GM12878 (cell line): ENCODE measurements at regions of chr5 and their contacts with region 1.

Region 1: GRCh38 chr5:151315998-151316597 is 12.5 kb upstream of the SLC36A3 start:
- DNase-seq: peak; percentile 7
- ATAC-seq: peak; percentile 95
- H3K4me3 ChIP-seq: no peak overlapping the region
- H3K27ac ChIP-seq: no peak overlapping the region
- H3K4me1 ChIP-seq: no peaks in the 10 kb centered on the region
- H3K27me3 ChIP-seq: no peaks in the 10 kb centered on the region; a peak in 1 of 4 replicates
- CTCF ChIP-seq: peak; percentile 93 to 95 (median 94); a peak in 5 of 6 replicates
- EP300 ChIP-seq: no peak
- POLR2A ChIP-seq: no peak
- RAD21 ChIP-seq: peak; percentile 86

Region 2: GRCh38 chr5:150106674-150107426 is 1209.2 kb before region 1 on chr5:
- CTCF ChIA-PET with region 1: no interaction called
- POLR2A ChIA-PET with region 1: no interaction called
- RAD21 ChIA-PET with region 1: no interaction called
- SMC1A ChIA-PET with region 1: no interaction called
- in situ Hi-C with region 1: no loop called
- intact Hi-C with region 1: no loop called
- DNase-seq: no peak
- ATAC-seq: peak; percentile 34; the same call in 2 of the 3 replicates
- H3K4me3 ChIP-seq: no peak overlapping the region
- H3K27ac ChIP-seq: no peak overlapping the region
- H3K4me1 ChIP-seq: peaks cover 14% of the 10 kb centered on the region
- H3K27me3 ChIP-seq: no peaks in the 10 kb centered on the region
- CTCF ChIP-seq: no peak
- EP300 ChIP-seq: no peak
- POLR2A ChIP-seq: no peak
- RAD21 ChIP-seq: no peak

Region 3: DNA sequence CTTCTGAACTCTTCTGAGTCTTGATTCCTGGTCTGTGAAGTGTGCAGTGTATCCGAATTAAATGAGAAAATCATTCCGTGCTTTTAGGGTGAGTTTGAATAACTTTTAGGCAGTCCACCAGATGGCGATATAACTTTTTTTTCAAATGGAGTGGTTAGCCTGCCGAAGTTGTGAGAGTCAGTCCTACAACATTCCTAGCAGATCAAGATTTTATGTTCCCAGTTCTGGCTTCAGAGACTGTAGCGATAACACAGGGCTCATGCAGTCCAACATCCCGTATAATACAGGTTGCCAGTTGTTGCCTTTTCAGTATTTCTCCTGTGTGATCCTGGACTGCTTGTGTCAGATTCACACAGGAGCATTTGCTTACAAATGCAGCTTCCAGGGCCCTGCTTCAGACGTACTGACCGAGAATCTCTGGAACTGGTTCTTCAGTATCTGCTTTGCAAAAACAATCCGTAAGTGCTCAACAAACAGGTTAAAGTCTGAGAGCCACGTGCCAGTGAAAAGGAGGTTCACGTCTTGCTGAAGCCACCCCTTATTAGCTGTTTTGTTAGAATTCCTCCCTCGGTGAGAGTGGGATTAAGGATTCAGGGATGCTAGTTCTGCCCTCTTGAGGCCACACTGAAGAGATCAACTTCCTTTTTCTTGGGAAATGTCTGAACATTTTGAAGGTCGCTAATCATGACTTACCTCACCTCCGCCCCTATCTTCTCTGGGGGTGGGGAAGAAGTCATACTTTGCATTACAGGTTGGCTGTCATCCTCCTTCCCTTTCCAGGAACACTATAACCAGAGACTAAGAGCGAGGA is 514.8 kb before region 1 on chr5:
- CTCF ChIA-PET with region 1: interaction called, 4 read pairs
- POLR2A ChIA-PET with region 1: no interaction called
- RAD21 ChIA-PET with region 1: no interaction called
- SMC1A ChIA-PET with region 1: no interaction called
- in situ Hi-C with region 1: no loop called
- intact Hi-C with region 1: loop called (anchors 10 kb)
- DNase-seq: no peak
- ATAC-seq: peak; percentile 83
- H3K4me3 ChIP-seq: no peak overlapping the region
- H3K27ac ChIP-seq: no peak overlapping the region
- H3K4me1 ChIP-seq: no peaks in the 10 kb centered on the region
- H3K27me3 ChIP-seq: no peaks in the 10 kb centered on the region
- CTCF ChIP-seq: peak; percentile 49 to 60 (median 52); a peak in 5 of 6 replicates
- EP300 ChIP-seq: no peak
- POLR2A ChIP-seq: no peak
- RAD21 ChIP-seq: peak; percentile 61

Region 4: DNA sequence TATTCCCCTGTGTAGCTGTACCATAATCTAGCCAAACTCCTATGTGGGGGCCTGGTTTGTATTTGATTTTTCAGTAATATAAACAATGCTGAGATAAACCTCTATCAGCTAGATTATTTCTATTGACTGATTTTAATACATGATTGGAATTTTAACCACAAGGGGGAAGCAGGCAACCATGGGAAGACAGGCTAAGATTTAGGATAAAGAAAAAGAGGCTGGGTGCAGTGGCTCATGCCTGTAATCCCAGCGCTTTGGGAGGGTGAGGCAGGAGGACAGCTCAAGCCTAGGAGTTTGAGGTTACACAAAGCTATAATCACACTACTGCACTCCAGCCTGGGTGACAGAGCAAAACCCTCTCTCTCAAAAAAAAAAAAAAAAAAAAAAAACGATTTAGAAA is 313.8 kb before region 1 on chr5:
- CTCF ChIA-PET with region 1: interaction called, 7 read pairs
- POLR2A ChIA-PET with region 1: no interaction called
- RAD21 ChIA-PET with region 1: no interaction called
- SMC1A ChIA-PET with region 1: no interaction called
- in situ Hi-C with region 1: no loop called
- intact Hi-C with region 1: loop called (anchors 10 kb)
- DNase-seq: no peak
- ATAC-seq: no peak
- H3K4me3 ChIP-seq: no peak overlapping the region
- H3K27ac ChIP-seq: no peak overlapping the region
- H3K4me1 ChIP-seq: no peaks in the 10 kb centered on the region
- H3K27me3 ChIP-seq: no peaks in the 10 kb centered on the region
- CTCF ChIP-seq: no peak; a peak in 1 of 6 replicates
- EP300 ChIP-seq: no peak
- POLR2A ChIP-seq: no peak
- RAD21 ChIP-seq: peak; percentile 42

Region 5: GRCh38 chr5:151283816-151284205 is 32.3 kb before region 1 on chr5:
- CTCF ChIA-PET with region 1: interaction called, 10 read pairs
- POLR2A ChIA-PET with region 1: no interaction called
- RAD21 ChIA-PET with region 1: interaction called, 4 read pairs
- SMC1A ChIA-PET with region 1: interaction called, 3 read pairs
- in situ Hi-C with region 1: no loop called
- intact Hi-C with region 1: no loop called
- DNase-seq: no peak
- ATAC-seq: no peak; the same call in 2 of the 3 replicates
- H3K4me3 ChIP-seq: no peak overlapping the region
- H3K27ac ChIP-seq: no peak overlapping the region
- H3K4me1 ChIP-seq: no peaks in the 10 kb centered on the region
- H3K27me3 ChIP-seq: no peaks in the 10 kb centered on the region
- CTCF ChIP-seq: no peak
- EP300 ChIP-seq: no peak
- POLR2A ChIP-seq: no peak
- RAD21 ChIP-seq: no peak

Region 6: DNA sequence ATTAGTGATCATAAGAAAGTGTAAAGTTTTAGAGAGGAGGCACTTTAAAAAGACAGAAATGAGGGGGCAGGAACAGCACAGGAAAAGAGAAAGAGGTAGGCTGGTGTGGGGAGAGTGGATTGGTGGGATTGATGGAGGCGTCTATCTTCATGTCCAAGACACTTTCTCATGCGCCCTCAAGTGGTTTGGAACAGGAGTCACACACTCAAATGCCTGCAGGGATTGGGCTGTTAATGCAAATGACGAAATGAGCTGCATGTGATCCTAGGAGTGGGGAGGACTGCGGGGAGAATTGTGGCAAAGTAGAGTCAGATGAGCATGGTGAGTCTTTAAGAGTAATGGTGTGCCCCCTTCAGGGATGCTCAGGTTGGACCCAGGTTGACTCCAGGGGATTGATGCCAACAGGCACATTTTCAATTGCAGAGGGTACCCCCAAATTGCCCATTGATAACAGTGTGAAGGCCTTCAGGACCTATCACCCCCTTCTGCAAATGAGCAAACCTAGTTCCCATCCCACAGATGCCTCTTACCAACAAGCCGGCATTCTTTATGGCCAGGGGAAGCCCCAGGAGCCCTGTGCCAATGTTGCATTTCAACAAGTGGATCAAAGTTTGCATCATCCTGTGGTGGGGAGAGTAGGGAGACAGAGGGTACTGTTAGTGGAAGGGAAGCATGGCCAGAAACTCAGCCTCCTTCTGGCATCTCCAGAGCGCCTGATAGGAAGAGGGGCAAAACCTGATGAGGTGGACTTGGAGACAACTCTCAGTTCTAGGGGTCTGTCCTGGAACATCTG is 17.8 kb before region 1 on chr5:
- CTCF ChIA-PET with region 1: interaction called, 14 read pairs
- POLR2A ChIA-PET with region 1: interaction called, 3 read pairs
- RAD21 ChIA-PET with region 1: interaction called, 6 read pairs
- SMC1A ChIA-PET with region 1: interaction called, 9 read pairs
- in situ Hi-C with region 1: no loop called
- intact Hi-C with region 1: no loop called
- DNase-seq: peak; percentile 26
- ATAC-seq: peak; percentile 98
- H3K4me3 ChIP-seq: no peak overlapping the region
- H3K27ac ChIP-seq: no peak overlapping the region
- H3K4me1 ChIP-seq: no peaks in the 10 kb centered on the region
- H3K27me3 ChIP-seq: no peaks in the 10 kb centered on the region; a peak in 1 of 4 replicates
- CTCF ChIP-seq: peak; percentile 72 to 82 (median 75)
- EP300 ChIP-seq: no peak
- POLR2A ChIP-seq: no peak
- RAD21 ChIP-seq: peak; percentile 83

Region 7: GRCh38 chr5:151499501-151500035 is 183.5 kb after region 1 on chr5:
- CTCF ChIA-PET with region 1: interaction called, 10 read pairs
- POLR2A ChIA-PET with region 1: no interaction called
- RAD21 ChIA-PET with region 1: interaction called, 3 read pairs
- SMC1A ChIA-PET with region 1: no interaction called
- in situ Hi-C with region 1: no loop called
- intact Hi-C with region 1: loop called (anchors 1 kb)
- DNase-seq: no peak
- ATAC-seq: no peak
- H3K4me3 ChIP-seq: no peak overlapping the region
- H3K27ac ChIP-seq: no peak overlapping the region
- H3K4me1 ChIP-seq: peaks cover 5% of the 10 kb centered on the region; the same call in 1 of the 2 replicates
- H3K27me3 ChIP-seq: no peaks in the 10 kb centered on the region
- CTCF ChIP-seq: no peak
- EP300 ChIP-seq: no peak
- POLR2A ChIP-seq: no peak
- RAD21 ChIP-seq: no peak